Common myeloid progenitor, CD34-positive (primary cell): ENCODE measurements at regions of chr6 and their contacts with region 1.

Region 1: DNA sequence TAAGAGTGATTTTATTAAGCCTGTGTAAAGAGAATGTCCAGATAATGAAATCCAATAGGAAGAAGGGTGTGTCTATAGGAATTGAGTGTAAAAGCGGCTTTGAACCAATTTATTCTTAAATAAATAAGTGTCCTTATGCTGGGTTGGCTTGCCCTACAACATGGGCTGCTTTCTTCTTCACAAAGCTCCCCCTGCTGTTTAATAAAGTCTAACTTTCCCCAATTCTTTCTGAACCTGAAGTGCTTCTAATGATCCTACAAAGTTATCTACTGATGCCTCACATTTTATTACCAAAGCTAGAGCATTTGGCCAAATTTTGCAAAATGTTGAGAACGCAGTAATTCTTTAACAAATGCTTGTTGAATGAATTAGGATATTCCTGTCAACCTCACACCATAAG is 36.3 kb upstream of the SIRT5 start:
- DNase-seq: peak; percentile 66 to 75 (median 75)
- H3K4me3 ChIP-seq: no peak overlapping the region
- H3K27ac ChIP-seq: no peak overlapping the region
- H3K4me1 ChIP-seq: peaks cover 0 to 2% (median 0%) of the 10 kb centered on the region in 4 experiments
- H3K27me3 ChIP-seq: no peaks in the 10 kb centered on the region

Region 2: DNA sequence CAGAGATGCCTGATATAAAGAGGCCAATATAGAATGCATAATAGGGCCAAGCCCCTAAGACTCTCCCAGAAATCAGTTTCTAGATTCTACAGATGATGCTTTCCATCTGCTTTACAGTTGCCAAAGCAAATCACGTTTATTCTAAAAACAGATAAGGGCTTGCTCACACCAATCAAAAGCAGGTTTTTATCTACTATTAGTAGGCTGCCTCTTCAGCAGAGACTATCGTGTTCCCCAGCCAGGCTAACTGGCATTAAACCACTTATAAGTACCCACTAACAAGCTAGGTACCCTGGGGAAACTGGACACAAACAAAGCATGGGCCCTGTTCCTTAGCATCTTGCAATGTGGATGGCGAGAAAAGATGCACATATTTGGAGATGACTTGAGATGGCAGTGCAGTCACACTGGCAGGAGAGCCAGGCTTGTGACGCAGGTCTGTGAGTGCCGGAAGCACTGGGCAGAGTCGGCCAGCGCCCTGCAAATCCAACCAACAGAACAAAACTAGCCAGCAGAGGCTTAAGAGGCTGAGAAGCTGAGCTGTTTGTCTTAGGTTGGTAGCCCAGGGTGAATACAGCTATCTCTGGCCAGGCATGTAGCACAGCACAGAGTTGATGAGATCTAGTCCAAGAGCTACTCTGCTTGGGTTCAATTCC is 124.1 kb before region 1 on chr6:
- CTCF ChIA-PET with region 1: interaction called, 12 read pairs
- POLR2A ChIA-PET with region 1: no interaction called
- DNase-seq: peak; percentile 68 to 89 (median 75)
- H3K4me3 ChIP-seq: no peak overlapping the region
- H3K27ac ChIP-seq: no peak overlapping the region
- H3K4me1 ChIP-seq: peaks cover 0 to 8% (median 2%) of the 10 kb centered on the region in 4 experiments
- H3K27me3 ChIP-seq: no peaks in the 10 kb centered on the region

Region 3: DNA sequence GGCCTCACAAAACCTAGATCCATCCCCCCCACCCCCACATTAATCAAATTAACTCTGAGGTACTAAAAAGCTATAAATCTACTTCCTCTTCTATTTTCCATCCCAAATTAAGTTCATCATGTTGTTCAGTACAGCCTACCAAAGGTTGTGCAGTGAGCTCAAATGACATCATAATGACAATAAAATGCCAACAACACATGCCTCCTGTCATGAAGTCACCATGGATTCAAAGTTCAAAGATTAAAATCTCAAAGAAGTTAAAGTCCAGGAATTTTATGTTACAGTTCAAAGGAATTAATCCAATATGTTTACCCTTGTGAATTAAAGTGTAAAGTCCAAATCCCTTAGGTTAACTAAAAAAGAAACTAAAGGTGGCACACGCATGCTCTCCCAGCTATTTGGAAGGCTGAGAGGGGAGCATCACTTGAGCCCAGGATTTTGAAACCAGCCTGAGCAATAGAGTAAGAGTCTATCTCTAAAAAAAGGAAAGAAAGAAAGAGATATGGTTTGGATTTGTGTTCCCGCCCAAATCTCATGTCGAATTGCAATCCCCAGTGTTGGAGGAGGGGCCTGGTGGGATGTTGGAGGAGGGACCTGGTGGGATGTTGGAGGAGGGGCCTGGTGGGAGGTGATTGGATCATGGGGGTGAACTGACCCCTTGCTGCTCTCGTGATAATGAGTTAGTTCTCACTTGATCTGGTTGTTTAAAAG is 10.6 kb after region 1 on chr6:
- CTCF ChIA-PET with region 1: interaction called, 14 read pairs
- POLR2A ChIA-PET with region 1: no interaction called
- DNase-seq: peak in 1 of 3 donors; percentile 45
- H3K4me3 ChIP-seq: no peak overlapping the region
- H3K27ac ChIP-seq: no peak overlapping the region
- H3K4me1 ChIP-seq: peaks cover 0 to 11% (median 5%) of the 10 kb centered on the region in 4 experiments
- H3K27me3 ChIP-seq: no peaks in the 10 kb centered on the region